ENCODE measurements at regions of chr4 and their contacts with region 1.

Region 1: GRCh38 chr4:112145326-112145819 is at the start of gene FAM241A:
- DNase-seq: peak; percentile 94
- ATAC-seq: peak; percentile 94
- H3K4me3 Mint-ChIP-seq: peak within 1 kb of the TSS; percentile 90
- H3K27ac Mint-ChIP-seq: peak within 1 kb of the TSS; percentile 90
- H3K4me1 Mint-ChIP-seq: peaks cover 39% of the 10 kb centered on the region
- H3K27me3 Mint-ChIP-seq: no peaks in the 10 kb centered on the region
- total RNA-seq, gene FAM241A: 3.2 to 3.5 TPM

Region 2: DNA sequence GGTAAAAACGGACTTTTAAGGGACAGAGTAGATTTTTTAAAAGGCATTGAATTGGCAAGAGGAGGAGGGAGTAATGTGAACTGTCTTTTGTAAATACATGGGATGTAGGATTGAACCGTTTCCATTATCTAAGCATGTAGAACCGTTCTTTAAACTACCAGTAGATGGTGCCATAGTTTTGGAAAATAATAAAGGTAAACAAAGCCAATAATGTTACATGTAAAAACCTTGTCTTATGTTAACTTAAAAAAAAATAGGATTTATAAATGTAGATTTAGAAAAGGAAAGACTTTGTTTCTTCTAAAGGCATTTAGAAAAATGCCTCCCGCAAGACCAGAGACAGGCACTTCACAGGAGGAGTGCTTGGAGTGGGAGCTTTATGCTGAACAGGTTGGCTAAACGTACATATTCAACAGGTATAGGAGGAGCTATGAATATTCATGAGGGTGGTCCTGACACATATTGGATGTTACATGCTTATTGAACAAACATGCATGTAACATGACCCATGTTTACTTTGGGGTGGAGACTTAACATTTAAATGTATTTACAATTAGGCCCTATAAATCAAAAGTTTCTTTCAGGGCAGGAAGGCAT is 45.6 kb before region 1 on chr4:
- CTCF ChIA-PET with region 1: interaction called, 5 read pairs
- POLR2A ChIA-PET with region 1: no interaction called
- intact Hi-C with region 1: loop called in 1 of 2 experiments (anchors 5 kb)
- DNase-seq: no peak
- ATAC-seq: peak; percentile 80
- H3K4me3 Mint-ChIP-seq: no peak overlapping the region
- H3K27ac Mint-ChIP-seq: no peak overlapping the region
- H3K4me1 Mint-ChIP-seq: no peaks in the 10 kb centered on the region
- H3K27me3 Mint-ChIP-seq: peaks cover 12% of the 10 kb centered on the region

Region 3: DNA sequence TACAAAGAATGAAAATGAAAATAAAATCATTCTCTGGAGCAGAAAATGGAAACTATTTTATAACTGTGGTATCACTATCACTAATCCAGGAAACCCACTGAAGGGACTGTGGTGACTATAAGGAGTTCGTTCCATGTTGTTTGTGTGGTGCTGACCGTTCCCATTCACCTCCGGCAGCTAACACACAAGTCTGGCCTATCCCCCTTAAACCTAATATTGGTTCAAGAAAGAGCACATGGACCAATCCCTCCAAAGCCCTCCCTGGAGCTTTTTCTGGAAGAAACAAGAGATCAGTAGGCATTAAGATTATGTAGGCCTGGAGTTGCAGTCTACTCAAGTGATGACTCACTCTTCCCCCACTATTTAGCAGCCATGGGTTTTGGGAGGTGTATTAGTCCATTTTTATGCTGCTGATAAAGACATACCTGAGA is 26.0 kb before region 1 on chr4:
- CTCF ChIA-PET with region 1: interaction called, 3 read pairs
- POLR2A ChIA-PET with region 1: no interaction called
- intact Hi-C with region 1: loop called (anchors 1 kb)
- DNase-seq: peak; percentile 24
- ATAC-seq: peak; percentile 87
- H3K4me3 Mint-ChIP-seq: no peak overlapping the region
- H3K27ac Mint-ChIP-seq: peak overlapping the region; percentile 83
- H3K4me1 Mint-ChIP-seq: peaks cover 15% of the 10 kb centered on the region
- H3K27me3 Mint-ChIP-seq: no peaks in the 10 kb centered on the region

Region 4: DNA sequence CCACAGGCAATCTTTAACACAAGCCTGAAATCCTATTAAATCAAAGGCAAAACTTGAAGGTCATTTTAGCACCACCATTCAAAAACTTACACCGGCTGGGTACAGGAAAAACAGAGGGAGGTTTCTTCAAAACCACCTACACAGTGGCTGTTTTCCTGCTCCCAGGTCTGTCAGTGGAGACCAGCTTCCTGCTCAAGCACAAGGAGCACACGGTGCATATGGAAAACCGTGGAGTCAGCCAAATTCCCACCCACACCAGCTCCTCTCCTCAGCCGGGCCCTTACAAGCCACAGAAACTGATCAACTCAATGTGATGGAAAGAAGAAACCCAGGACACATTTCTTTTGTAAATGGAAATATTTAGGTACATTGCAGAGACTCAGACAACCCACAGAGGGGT is 14.5 kb before region 1 on chr4:
- CTCF ChIA-PET with region 1: no interaction called
- POLR2A ChIA-PET with region 1: no interaction called
- intact Hi-C with region 1: no loop called
- DNase-seq: no peak
- ATAC-seq: no peak
- H3K4me3 Mint-ChIP-seq: no peak overlapping the region
- H3K27ac Mint-ChIP-seq: no peak overlapping the region
- H3K4me1 Mint-ChIP-seq: peaks cover 13% of the 10 kb centered on the region
- H3K27me3 Mint-ChIP-seq: peaks cover under 1% of the 10 kb centered on the region

Region 5: GRCh38 chr4:112183252-112183651 is 37.9 kb after region 1 on chr4:
- CTCF ChIA-PET with region 1: no interaction called
- POLR2A ChIA-PET with region 1: no interaction called
- intact Hi-C with region 1: loop called in 1 of 2 experiments (anchors 5 kb)
- DNase-seq: no peak
- ATAC-seq: no peak
- H3K4me3 Mint-ChIP-seq: no peak overlapping the region
- H3K27ac Mint-ChIP-seq: peak overlapping the region; percentile 42
- H3K4me1 Mint-ChIP-seq: peaks cover 47% of the 10 kb centered on the region
- H3K27me3 Mint-ChIP-seq: no peaks in the 10 kb centered on the region

Region 6: DNA sequence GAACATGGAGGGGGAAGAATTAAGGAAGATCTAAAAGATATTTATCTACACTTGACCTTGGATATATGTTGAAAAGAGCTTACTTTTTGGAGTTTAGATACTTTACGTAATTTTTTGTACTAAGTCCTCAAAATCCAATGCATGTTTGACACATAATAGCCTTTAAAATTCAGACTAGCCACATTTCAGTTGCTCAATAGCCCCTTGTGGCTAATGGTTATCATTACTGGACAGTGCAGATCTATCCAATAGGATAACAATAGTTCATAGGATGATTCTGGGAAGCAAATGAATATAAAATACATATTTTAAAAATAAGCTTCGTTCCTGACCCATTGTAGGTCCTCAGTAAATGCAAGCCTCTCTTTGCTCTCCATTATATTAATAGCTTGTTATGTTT is 100.0 kb after region 1 on chr4:
- CTCF ChIA-PET with region 1: interaction called, 4 read pairs
- POLR2A ChIA-PET with region 1: interaction called, 10 read pairs
- intact Hi-C with region 1: no loop called
- DNase-seq: no peak
- ATAC-seq: no peak
- H3K4me3 Mint-ChIP-seq: no peak overlapping the region
- H3K27ac Mint-ChIP-seq: no peak overlapping the region
- H3K4me1 Mint-ChIP-seq: peaks cover 10% of the 10 kb centered on the region
- H3K27me3 Mint-ChIP-seq: no peaks in the 10 kb centered on the region

Region 7: GRCh38 chr4:112636688-112637551 is 491.5 kb after region 1 on chr4 and contains the starts of genes LARP7 and ZGRF1:
- CTCF ChIA-PET with region 1: no interaction called
- POLR2A ChIA-PET with region 1: no interaction called
- intact Hi-C with region 1: loop called in 1 of 2 experiments (anchors 1 kb)
- DNase-seq: peak; percentile 99
- ATAC-seq: peak; percentile 95
- H3K4me3 Mint-ChIP-seq: no peak within 1 kb of the TSS
- H3K27ac Mint-ChIP-seq: peak within 1 kb of the TSS; percentile 68
- H3K4me1 Mint-ChIP-seq: peaks cover 23% of the 10 kb centered on the region
- H3K27me3 Mint-ChIP-seq: no peaks in the 10 kb centered on the region
- total RNA-seq, gene LARP7: 46.5 to 47.1 TPM
- total RNA-seq, gene ZGRF1: 38.4 to 45.0 TPM

Region 8: DNA sequence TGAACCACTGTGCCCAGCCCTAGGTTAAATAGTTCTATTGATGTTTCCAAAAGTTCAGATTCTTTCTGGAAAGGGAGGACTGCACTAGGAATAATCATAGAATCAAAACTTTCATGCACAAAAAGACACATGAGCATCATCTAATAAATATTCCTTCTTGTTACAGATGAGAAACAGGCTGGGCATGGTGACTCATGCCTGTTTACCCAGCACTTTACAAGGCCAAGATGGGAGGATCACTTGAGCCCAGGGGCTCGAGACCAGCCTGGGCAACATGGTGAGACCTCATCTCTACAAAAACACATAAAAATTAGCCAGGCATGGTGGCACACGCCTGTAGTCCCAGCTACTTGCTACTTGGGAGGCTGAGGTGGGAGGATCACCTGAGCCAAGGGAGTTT is 519.2 kb after region 1 on chr4:
- CTCF ChIA-PET with region 1: no interaction called
- POLR2A ChIA-PET with region 1: no interaction called
- intact Hi-C with region 1: no loop called
- DNase-seq: no peak
- ATAC-seq: no peak
- H3K4me3 Mint-ChIP-seq: no peak overlapping the region
- H3K27ac Mint-ChIP-seq: no peak overlapping the region
- H3K4me1 Mint-ChIP-seq: no peaks in the 10 kb centered on the region
- H3K27me3 Mint-ChIP-seq: no peaks in the 10 kb centered on the region

Measured in activated CD4-positive, alpha-beta T cell treated with anti-CD3 and anti-CD28 coated beads for 36 hours (primary cell).